ENCODE measurements at regions of chr2 and their contacts with region 1.

Region 1: DNA sequence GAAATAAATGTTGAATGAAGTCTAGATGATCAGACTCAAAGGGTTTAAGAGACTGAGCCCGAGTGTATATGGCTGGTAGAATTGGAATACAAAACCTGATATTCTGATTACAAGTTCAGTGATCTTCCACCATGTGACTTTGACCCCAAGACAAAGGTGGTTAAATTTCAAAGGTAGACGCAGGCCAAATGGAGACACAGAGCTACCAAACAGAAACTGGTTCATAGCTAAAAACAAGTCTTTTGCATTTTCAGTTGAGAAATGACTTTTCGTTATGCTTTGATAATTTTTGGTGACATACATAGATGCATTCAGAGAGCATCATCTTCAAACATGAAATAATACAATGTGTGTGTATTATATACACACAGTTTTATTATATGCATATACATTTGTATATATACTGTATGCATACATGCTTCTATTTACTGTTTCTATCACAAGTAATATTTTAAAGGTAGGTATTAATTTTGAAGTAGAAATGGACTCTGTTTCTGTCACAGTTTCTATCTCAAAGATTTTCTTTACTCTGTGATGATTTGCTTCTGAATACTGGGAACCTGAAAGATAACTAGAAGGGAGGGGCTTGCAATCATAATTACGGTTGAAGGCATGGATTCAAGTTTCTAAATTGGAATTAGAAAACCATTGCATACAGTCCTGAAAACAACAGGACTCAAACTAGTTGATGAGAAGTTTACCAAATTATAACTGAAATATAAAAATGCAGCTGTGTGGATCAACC is 142.3 kb downstream of the ABCA12 start:
- DNase-seq: no peak
- ATAC-seq: no peak
- H3K4me3 ChIP-seq: no peak overlapping the region
- H3K27ac ChIP-seq: no peak overlapping the region
- H3K4me1 ChIP-seq: no peaks in the 10 kb centered on the region
- H3K27me3 ChIP-seq: no peaks in the 10 kb centered on the region
- CTCF ChIP-seq: no peak

Region 2: DNA sequence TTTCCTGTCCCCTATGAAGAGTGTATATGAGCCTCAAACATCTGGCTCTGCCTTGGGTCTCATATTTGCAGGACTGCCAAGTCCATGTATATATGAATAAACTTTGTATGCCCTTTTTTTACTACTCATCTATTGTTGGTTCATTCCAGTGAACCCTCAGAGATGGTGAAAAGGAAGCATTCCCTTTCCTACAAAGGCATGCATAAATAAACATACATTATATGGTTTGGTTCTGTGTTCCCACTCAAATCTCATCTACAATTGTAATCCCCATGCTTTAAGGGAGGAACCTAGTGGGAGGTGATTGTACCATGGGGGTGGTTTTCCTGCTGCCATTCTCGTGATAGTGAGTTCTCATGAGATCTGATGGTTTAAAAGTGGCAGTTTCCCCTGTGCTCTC is 1177.7 kb before region 1 on chr2:
- intact Hi-C with region 1: loop called in 1 of 10 experiments (anchors 10 kb)
- DNase-seq: no peak
- ATAC-seq: no peak
- H3K4me3 ChIP-seq: no peak overlapping the region
- H3K27ac ChIP-seq: no peak overlapping the region
- H3K4me1 ChIP-seq: no peaks in the 10 kb centered on the region
- H3K27me3 ChIP-seq: no peaks in the 10 kb centered on the region
- CTCF ChIP-seq: no peak

Region 3: GRCh38 chr2:214902286-214902685 is 93.8 kb before region 1 on chr2:
- intact Hi-C with region 1: no loop called
- DNase-seq: no peak
- ATAC-seq: no peak
- H3K4me3 ChIP-seq: no peak overlapping the region
- H3K27ac ChIP-seq: no peak overlapping the region
- H3K4me1 ChIP-seq: no peaks in the 10 kb centered on the region
- H3K27me3 ChIP-seq: no peaks in the 10 kb centered on the region
- CTCF ChIP-seq: no peak

Measured in heart right ventricle (tissue), 16 donors.